ENCODE measurements at regions of chr6 and their contacts with region 1.

Region 1: GRCh38 chr6:80622641-80623040 is 516.2 kb downstream of the BCKDHB start:
- DNase-seq: peak; percentile 66
- H3K4me3 Mint-ChIP-seq: no peak overlapping the region
- H3K27ac Mint-ChIP-seq: peak overlapping the region; percentile 34
- H3K4me1 Mint-ChIP-seq: peaks cover 48% of the 10 kb centered on the region
- H3K27me3 Mint-ChIP-seq: no peaks in the 10 kb centered on the region
- CTCF ChIP-seq: no peak

Region 2: DNA sequence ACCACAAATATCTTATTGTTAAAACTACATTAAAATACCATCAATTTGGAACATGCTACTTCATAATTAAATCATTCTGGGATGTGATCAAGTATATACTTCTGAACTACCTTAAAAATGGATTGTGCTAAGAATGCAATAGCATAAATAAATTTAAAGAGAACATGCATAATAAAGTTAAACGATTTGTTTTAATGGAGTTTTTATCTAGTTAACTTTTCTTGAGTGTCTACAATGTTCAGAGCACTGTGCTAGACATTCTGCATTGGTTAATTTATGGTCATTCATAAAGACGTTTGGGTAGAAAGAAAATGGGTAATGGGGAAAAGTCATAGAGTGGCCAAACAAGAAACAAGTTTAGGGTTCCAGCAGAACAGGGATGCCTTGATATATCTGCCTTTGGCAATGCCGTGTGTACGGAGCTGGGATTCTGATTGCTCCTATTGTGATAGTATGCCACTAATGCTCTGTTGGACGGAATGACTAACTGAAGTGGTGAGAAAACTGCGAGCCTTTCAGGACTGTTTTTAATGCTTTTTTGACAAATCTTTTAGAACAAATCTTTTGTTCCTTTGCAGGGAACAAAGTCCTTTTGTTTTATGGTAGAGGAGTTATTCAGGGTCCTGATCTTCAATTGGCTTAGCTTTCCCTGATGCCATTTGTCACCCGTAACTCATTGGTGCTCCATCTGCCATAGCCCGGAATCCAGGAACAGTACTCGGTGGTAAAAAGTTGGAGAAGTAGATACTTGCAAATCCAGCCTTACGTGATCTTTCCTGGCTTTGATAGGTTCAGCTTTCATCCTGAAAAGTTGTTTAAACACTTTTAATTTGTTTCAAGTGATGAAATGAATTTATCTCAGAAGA is 353.5 kb before region 1 on chr6:
- CTCF ChIA-PET with region 1: no interaction called
- intact Hi-C with region 1: no loop called
- DNase-seq: no peak
- H3K4me3 Mint-ChIP-seq: no peak overlapping the region
- H3K27ac Mint-ChIP-seq: no peak overlapping the region
- H3K4me1 Mint-ChIP-seq: no peaks in the 10 kb centered on the region
- H3K27me3 Mint-ChIP-seq: no peaks in the 10 kb centered on the region
- CTCF ChIP-seq: no peak

Region 3: GRCh38 chr6:80638213-80639055 is 15.8 kb after region 1 on chr6:
- CTCF ChIA-PET with region 1: no interaction called
- intact Hi-C with region 1: loop called (anchors 2 kb)
- DNase-seq: peak; percentile 79
- H3K4me3 Mint-ChIP-seq: peak overlapping the region; percentile 28
- H3K27ac Mint-ChIP-seq: peak overlapping the region; percentile 97
- H3K4me1 Mint-ChIP-seq: peaks cover 39% of the 10 kb centered on the region
- H3K27me3 Mint-ChIP-seq: no peaks in the 10 kb centered on the region
- CTCF ChIP-seq: no peak

Region 4: DNA sequence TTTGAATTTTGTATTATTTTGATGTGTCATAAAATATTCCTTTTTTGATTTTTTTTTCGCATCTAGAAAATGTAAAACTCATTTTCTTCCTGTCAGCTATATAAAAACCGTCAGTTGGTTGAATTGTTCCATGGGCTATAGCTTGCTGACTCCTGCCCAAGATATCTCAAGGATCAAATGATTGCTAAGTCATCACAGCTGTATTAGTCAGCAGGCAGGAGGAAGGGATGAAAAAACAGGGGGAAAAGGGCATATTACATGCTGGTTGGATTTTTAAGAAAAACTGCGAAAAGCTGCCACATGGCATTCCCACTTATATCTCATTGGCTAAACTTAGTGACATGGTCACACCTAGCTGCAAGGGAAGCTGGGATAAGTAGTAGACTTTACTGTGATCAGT is 53.7 kb after region 1 on chr6:
- CTCF ChIA-PET with region 1: no interaction called
- intact Hi-C with region 1: loop called (anchors 1 kb)
- DNase-seq: no peak
- H3K4me3 Mint-ChIP-seq: no peak overlapping the region
- H3K27ac Mint-ChIP-seq: no peak overlapping the region
- H3K4me1 Mint-ChIP-seq: peaks cover 21% of the 10 kb centered on the region
- H3K27me3 Mint-ChIP-seq: no peaks in the 10 kb centered on the region
- CTCF ChIP-seq: no peak